K562 (cell line): ENCODE measurements at regions of chr7 and their contacts with region 1.

Region 1: DNA sequence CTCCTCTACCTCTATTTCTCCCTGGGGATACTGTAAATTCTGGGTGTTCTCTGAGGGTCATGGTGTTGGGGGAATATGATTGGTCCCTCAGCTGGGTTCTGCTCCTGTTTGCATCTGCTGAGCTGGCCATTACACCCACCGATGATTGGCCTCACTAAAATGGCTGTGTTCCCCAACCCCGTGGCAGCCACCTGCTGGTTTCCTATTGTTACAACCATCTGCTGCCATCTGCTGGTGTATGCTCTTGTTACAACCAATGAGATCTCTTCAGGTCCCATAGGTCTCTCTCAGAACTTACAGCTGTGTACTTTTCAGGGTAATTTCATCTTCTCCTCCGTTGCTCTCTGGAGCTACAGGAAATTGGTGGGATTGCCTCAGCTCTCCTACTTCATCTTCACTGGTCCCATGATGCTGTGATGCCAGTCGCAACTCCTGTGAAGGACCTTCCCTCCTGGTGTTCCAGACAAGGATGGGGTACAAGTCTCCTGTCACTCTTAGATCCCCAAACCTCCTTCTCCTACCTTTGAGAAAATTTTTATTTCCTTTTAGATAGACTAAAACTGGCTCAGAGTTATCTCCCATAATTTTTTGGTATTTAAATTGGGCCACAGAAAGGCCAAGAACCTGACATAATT is 303.5 kb upstream of the SMIM30 start:
- DNase-seq: peak; percentile 78 to 93 (median 80)
- ATAC-seq: peak; percentile 100
- H3K4me3 ChIP-seq: no peak overlapping the region
- H3K27ac ChIP-seq: no peak overlapping the region
- H3K4me1 ChIP-seq: no peaks in the 10 kb centered on the region
- H3K27me3 ChIP-seq: no peaks in the 10 kb centered on the region
- CTCF ChIP-seq: peak; percentile 95 to 99 (median 99)
- EP300 ChIP-seq: no peak
- POLR2A ChIP-seq: no peak
- RAD21 ChIP-seq: peak; percentile 94 to 95

Region 2: GRCh38 chr7:112898432-112899290 is 523.2 kb before region 1 on chr7:
- CTCF ChIA-PET with region 1: no interaction called
- POLR2A ChIA-PET with region 1: no interaction called
- in situ Hi-C with region 1: no loop called
- intact Hi-C with region 1: loop called (anchors 10 kb)
- DNase-seq: peak; percentile 68 to 86 (median 72)
- ATAC-seq: peak; percentile 99
- H3K4me3 ChIP-seq: no peak overlapping the region
- H3K27ac ChIP-seq: no peak overlapping the region
- H3K4me1 ChIP-seq: no peaks in the 10 kb centered on the region; a peak in 1 of 5 replicates
- H3K27me3 ChIP-seq: no peaks in the 10 kb centered on the region
- CTCF ChIP-seq: peak; percentile 88 to 95 (median 91)
- EP300 ChIP-seq: no peak
- POLR2A ChIP-seq: no peak
- RAD21 ChIP-seq: peak; percentile 94 to 97

Region 3: DNA sequence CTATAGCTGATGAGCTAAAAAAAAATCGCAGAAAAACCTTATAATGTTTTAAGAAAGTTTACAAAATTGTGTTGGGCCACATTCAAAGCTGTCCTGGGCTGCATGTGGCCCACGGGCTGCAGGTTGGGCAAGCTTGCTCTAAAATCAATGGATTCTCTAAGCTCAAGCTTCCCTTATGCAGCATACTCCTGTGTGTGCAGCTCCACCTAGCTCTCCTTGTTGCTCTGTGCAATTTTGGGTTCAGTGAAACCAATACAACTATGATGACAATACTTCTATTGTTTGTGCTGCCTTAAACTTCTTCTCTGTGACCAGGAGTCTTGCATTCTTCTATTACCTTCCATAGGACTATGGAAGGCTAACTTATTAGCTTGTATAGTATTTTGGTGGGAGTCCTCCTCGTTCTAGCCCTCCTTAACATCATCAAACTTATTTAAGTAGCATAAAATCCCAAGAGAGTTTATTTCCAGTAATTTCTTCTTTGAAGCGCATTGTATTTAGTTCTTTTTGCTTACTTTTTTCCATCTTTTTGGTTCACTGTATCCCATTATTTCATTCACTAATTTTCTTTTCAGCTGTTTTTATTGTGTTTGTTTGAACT is 132.6 kb before region 1 on chr7:
- CTCF ChIA-PET with region 1: no interaction called
- POLR2A ChIA-PET with region 1: no interaction called
- in situ Hi-C with region 1: no loop called
- intact Hi-C with region 1: loop called (anchors 1 kb)
- DNase-seq: peak in 2 of 4 experiments; percentile 21 to 62
- ATAC-seq: peak; percentile 96
- H3K4me3 ChIP-seq: no peak overlapping the region
- H3K27ac ChIP-seq: no peak overlapping the region
- H3K4me1 ChIP-seq: peaks cover 0 to 6% of the 10 kb centered on the region in 2 experiments; a peak in 1 of 5 replicates
- H3K27me3 ChIP-seq: no peaks in the 10 kb centered on the region; a peak in 1 of 5 replicates
- CTCF ChIP-seq: peak; percentile 74 to 89 (median 75)
- EP300 ChIP-seq: no peak
- POLR2A ChIP-seq: no peak
- RAD21 ChIP-seq: peak; percentile 84 to 86

Region 4: GRCh38 chr7:113464096-113464855 is 42.5 kb after region 1 on chr7:
- CTCF ChIA-PET with region 1: no interaction called
- POLR2A ChIA-PET with region 1: no interaction called
- in situ Hi-C with region 1: no loop called
- intact Hi-C with region 1: no loop called
- DNase-seq: no peak
- ATAC-seq: no peak
- H3K4me3 ChIP-seq: no peak overlapping the region
- H3K27ac ChIP-seq: no peak overlapping the region
- H3K4me1 ChIP-seq: no peaks in the 10 kb centered on the region
- H3K27me3 ChIP-seq: no peaks in the 10 kb centered on the region
- CTCF ChIP-seq: no peak
- EP300 ChIP-seq: no peak
- POLR2A ChIP-seq: no peak
- RAD21 ChIP-seq: no peak